Endothelial cell of umbilical vein (primary cell): ENCODE measurements at regions of chr7 and their contacts with region 1.

Region 1: GRCh38 chr7:43700059-43700501 is 29.2 kb downstream of the COA1 start:
- DNase-seq: peak; percentile 69
- H3K4me3 ChIP-seq: no peak overlapping the region
- H3K27ac ChIP-seq: no peak overlapping the region
- H3K4me1 ChIP-seq: peaks cover 6% of the 10 kb centered on the region
- H3K27me3 ChIP-seq: no peaks in the 10 kb centered on the region
- CTCF ChIP-seq: peak; percentile 22 to 34
- POLR2A ChIP-seq: no peak

Region 2: GRCh38 chr7:43454936-43455518 is 245.1 kb before region 1 on chr7:
- CTCF ChIA-PET with region 1: interaction called, 10 read pairs
- POLR2A ChIA-PET with region 1: no interaction called
- dilution Hi-C with region 1: no loop called
- intact Hi-C with region 1: loop called (anchors 5 kb)
- DNase-seq: peak; percentile 68
- H3K4me3 ChIP-seq: peak overlapping the region in 1 of 3 experiments; percentile 39
- H3K27ac ChIP-seq: no peak overlapping the region
- H3K4me1 ChIP-seq: peaks cover 3% of the 10 kb centered on the region
- H3K27me3 ChIP-seq: peaks cover 9 to 29% of the 10 kb centered on the region in 2 experiments
- CTCF ChIP-seq: peak; percentile 30 to 50
- POLR2A ChIP-seq: no peak

Region 3: GRCh38 chr7:43604251-43604650 is 95.8 kb before region 1 on chr7:
- CTCF ChIA-PET with region 1: interaction called, 14 read pairs
- POLR2A ChIA-PET with region 1: no interaction called
- dilution Hi-C with region 1: loop called (anchors 25 kb)
- intact Hi-C with region 1: no loop called
- DNase-seq: no peak
- H3K4me3 ChIP-seq: no peak overlapping the region
- H3K27ac ChIP-seq: no peak overlapping the region
- H3K4me1 ChIP-seq: no peaks in the 10 kb centered on the region
- H3K27me3 ChIP-seq: no peaks in the 10 kb centered on the region
- CTCF ChIP-seq: no peak
- POLR2A ChIP-seq: no peak

Region 4: DNA sequence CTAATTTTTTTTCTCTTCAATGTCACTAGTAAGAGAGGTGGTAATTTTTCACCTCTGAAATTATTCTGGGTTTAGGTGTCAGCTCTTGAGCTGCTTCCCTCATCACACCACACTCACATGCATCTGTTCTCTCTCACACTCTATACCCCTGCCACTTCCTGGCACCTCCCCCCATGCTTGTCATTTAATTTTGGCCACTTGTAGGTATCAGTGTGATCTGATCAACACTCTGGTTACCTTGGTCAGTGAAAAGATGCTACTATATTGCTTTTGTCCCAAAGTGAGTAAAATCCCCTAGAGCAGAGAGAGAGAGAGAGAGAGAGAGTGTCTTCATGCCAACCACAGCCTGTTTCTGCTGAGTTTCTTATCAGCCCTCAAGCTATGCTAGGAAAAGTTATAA is 74.6 kb before region 1 on chr7:
- CTCF ChIA-PET with region 1: interaction called, 29 read pairs
- POLR2A ChIA-PET with region 1: no interaction called
- dilution Hi-C with region 1: no loop called
- intact Hi-C with region 1: no loop called
- DNase-seq: no peak
- H3K4me3 ChIP-seq: no peak overlapping the region
- H3K27ac ChIP-seq: no peak overlapping the region
- H3K4me1 ChIP-seq: peaks cover 5% of the 10 kb centered on the region
- H3K27me3 ChIP-seq: no peaks in the 10 kb centered on the region
- CTCF ChIP-seq: no peak
- POLR2A ChIP-seq: no peak

Region 5: DNA sequence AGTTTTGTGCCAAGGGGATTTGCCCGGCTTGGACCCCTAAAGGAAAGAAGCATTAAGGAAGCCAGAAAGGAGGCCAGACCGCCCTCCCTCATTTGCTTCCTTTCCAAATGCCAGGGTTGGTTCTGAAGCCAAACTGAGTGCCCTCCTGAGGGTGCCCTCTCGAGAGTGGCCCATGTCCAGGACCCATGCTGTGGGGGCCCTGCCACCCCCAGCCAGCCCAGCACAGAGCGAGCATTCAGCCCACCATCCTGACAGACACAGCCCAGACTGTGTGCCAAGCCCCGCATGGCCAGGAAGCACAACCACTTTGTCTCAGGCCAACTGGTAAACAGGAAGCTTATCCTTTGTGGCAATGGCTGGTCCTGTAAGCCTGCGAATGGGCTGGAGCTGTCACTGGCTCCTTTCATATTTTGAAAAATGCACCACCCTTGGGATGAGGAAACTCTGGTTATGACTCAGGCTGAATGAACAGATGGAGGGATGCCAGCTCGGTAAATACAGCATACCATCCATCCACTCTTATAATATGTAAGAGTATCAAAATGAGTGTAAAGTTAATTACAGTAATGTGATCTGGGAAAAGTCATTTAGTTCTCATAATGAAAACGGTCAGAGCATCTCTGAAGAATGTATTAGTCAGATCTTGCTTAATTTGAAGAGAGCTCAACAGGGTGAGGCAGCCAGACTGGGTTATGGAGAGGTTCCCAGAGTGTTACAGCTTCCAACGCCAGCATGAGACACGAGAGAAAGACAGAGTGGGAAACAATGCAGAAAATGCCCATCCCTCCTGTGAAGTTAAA is 52.2 kb before region 1 on chr7:
- CTCF ChIA-PET with region 1: interaction called, 130 read pairs
- POLR2A ChIA-PET with region 1: interaction called, 5 read pairs
- dilution Hi-C with region 1: no loop called
- intact Hi-C with region 1: no loop called
- DNase-seq: peak; percentile 98
- H3K4me3 ChIP-seq: peak overlapping the region in 1 of 3 experiments; percentile 52
- H3K27ac ChIP-seq: peak overlapping the region; percentile 97
- H3K4me1 ChIP-seq: peaks cover 74% of the 10 kb centered on the region
- H3K27me3 ChIP-seq: no peaks in the 10 kb centered on the region
- CTCF ChIP-seq: no peak
- POLR2A ChIP-seq: no peak

Region 6: DNA sequence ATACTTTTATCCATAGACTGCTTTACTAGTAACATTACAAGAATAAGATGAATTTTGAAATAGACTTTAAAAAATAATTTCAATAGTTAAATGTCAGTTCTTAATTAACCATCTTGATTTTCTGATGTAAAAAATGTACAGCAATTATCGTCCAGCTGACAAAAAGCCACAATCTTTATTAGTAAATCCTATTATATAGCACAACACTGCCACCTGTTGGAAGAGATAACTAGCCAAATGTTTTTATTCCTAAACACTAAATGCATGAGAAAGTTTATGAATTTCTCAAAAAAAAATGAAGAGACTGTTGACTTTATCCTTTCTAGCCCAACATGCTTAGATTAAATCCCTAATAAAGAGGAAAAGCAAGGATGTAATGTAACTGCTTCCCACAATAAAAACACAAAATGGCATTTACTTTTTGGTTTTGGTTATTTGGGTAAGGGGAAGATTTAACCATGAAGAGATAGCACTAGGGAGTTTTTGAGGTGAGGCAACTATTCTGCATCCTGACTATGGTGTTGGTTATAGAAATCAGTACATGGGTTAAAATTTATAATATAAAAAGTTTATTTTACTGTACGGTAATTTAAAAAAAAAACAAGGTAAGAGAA is 21.2 kb after region 1 on chr7:
- CTCF ChIA-PET with region 1: interaction called, 21 read pairs
- POLR2A ChIA-PET with region 1: no interaction called
- dilution Hi-C with region 1: no loop called
- intact Hi-C with region 1: no loop called
- DNase-seq: peak; percentile 65
- H3K4me3 ChIP-seq: no peak overlapping the region
- H3K27ac ChIP-seq: no peak overlapping the region
- H3K4me1 ChIP-seq: no peaks in the 10 kb centered on the region
- H3K27me3 ChIP-seq: no peaks in the 10 kb centered on the region
- CTCF ChIP-seq: peak; percentile 29 to 49
- POLR2A ChIP-seq: no peak